GM13976 (cell line): ENCODE measurements at regions of chr17 and their contacts with region 1.

Region 1: GRCh38 chr17:40909351-40909750 is 24.3 kb upstream of the KRT20 start:
- DNase-seq: peak; percentile 65
- CTCF ChIP-seq: peak; percentile 66

Region 2: DNA sequence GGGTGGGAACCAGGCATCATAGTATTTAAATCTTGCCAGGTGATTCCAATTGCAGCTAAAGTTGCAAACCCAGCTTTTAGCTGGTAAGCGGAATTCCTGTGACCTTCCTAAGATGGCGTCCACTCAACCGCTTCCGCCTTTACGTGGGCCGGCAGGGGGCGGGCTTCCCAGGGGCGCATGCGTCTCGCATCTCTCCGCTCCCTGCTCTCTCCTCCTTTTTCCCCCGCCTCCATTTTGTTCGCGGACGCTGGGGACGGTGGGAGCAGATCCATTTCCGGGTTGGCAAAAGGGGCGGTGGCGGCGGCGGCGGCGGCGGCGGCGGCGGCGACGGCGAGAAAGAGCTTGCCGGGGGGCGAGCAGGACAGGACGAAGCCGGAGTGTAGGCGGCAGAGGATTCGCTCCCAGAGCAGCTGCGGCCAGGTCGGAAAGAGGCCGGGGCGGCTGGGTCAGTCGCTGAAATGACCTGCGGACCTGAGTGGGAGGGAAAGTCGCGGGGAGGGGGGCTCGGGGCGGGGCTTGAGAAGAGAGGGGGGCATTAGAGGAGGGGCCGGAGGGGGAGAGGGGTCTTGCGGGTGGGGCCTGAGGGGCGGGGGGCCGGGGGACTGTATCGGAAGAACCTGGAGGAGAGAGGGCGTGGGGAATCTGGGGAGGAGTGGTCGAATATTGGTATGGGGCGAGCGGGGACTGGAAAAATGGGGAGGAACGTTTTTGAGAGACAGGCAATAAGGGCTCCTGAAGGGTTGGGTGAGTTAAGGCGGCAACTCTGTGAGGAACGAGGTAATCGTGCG is 690.1 kb before region 1 on chr17 and contains the start of gene WIPF2:
- in situ Hi-C with region 1: no loop called
- DNase-seq: peak; percentile 97
- CTCF ChIP-seq: peak; percentile 33

Region 3: DNA sequence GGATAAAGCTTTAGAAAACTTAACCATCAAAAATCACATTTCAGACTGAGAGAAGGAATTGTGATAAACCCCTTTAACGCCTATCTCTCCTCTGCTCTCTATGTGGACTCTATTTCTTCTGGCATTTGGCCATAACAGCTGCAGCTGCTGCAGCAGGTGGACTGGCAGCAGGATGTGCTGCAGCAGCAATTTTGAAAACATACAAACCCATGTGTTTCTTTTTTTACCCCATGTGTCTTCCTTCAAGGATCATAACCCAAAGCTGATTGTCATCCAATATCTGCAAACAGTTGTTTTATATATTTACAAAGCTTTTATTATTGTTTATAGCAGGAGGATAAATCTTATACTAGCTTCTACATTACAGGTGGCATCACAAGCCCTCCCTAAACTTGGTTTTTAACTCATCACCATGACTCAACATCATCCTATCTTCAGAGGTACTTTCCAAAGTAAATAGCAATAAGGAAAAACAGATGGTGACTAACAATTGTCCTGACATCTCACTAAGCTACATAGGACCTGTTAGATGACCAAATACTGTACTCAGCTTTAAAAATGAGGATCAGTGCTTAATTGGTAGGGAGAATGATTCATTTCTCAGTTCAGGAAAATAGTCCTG is 302.6 kb after region 1 on chr17:
- in situ Hi-C with region 1: no loop called
- DNase-seq: no peak
- CTCF ChIP-seq: no peak

Region 4: DNA sequence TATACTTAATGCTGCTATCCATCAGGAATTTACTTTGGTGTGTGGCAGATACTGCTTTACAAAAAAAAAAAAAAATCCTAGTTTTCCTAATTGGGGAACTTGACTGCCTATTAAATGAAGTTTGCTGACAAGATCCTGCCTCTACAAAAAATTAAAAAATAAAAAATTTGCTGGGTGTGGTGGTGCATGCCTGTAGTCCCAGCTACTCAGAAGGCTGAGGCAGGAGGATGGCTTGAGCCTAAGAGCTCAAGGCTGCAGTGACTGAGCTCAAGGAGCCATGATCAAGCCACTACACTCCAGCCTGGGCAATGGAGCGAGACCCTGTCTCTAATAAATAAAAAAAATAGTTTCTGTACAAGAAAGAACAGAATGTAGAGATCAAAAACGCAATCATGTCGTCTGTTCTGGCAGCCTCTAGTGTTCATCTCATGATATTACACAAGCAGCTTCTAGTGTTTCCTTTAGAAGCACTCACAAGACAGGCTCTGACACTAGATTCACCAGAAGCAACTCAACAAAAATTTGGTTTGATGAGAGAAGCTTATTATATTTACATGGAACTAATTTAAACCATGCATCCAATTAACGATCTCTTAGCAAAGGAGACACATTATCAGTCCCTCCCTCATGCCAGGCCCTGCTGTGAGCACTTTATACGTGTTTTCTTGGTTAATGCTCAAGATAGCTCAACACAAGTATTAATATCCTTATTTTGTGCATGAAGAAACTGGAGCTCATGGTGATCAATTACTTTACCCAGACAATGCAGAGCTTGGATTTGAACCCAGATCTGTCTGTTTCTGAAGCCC is 412.9 kb after region 1 on chr17:
- in situ Hi-C with region 1: loop called (anchors 25 kb)
- DNase-seq: peak; percentile 49
- CTCF ChIP-seq: peak; percentile 63

Region 5: GRCh38 chr17:41548844-41549595 is 639.7 kb after region 1 on chr17:
- in situ Hi-C with region 1: loop called (anchors 10 kb)
- DNase-seq: peak; percentile 86
- CTCF ChIP-seq: peak; percentile 80

Region 6: GRCh38 chr17:41665566-41666236 is 756.4 kb after region 1 on chr17:
- in situ Hi-C with region 1: loop called (anchors 25 kb)
- DNase-seq: peak; percentile 94
- CTCF ChIP-seq: peak; percentile 99